T-cell (primary cell): ENCODE measurements at regions of chr6 and their contacts with region 1.

Region 1: GRCh38 chr6:27312146-27312949 is at the start of gene POM121L2:
- DNase-seq: peak in 33 of 35 experiments; percentile 6 to 78 (median 44)
- ATAC-seq: peak; percentile 57 to 78 (median 74)
- H3K4me3 ChIP-seq: peak within 1 kb of the TSS; percentile 55 to 80
- H3K4me3 Mint-ChIP-seq: peak within 1 kb of the TSS; percentile 77 to 80 (median 78)
- H3K27ac ChIP-seq: no peak within 1 kb of the TSS
- H3K27ac Mint-ChIP-seq: peak within 1 kb of the TSS in 1 of 2 donors; percentile 12
- H3K4me1 ChIP-seq: peaks cover 0 to 14% of the 10 kb centered on the region in 2 experiments
- H3K4me1 Mint-ChIP-seq: peaks cover 9 to 13% (median 12%) of the 10 kb centered on the region in 3 donors
- H3K27me3 ChIP-seq: peaks cover 21 to 41% of the 10 kb centered on the region in 2 experiments
- H3K27me3 Mint-ChIP-seq: peaks cover 62 to 75% of the 10 kb centered on the region in 2 donors
- total RNA-seq, gene POM121L2: not detected

Region 2: GRCh38 chr6:27049863-27050781 is 262.2 kb before region 1 on chr6:
- CTCF ChIA-PET with region 1: no interaction called
- POLR2A ChIA-PET with region 1: interaction called in 1 of 2 experiments, 11 read pairs
- DNase-seq: no peak
- ATAC-seq: no peak
- H3K4me3 ChIP-seq: no peak overlapping the region
- H3K4me3 Mint-ChIP-seq: no peak overlapping the region
- H3K27ac ChIP-seq: no peak overlapping the region
- H3K27ac Mint-ChIP-seq: no peak overlapping the region
- H3K4me1 ChIP-seq: no peaks in the 10 kb centered on the region
- H3K4me1 Mint-ChIP-seq: no peaks in the 10 kb centered on the region
- H3K27me3 ChIP-seq: peaks cover 5 to 20% of the 10 kb centered on the region in 2 experiments
- H3K27me3 Mint-ChIP-seq: peaks cover 16 to 21% of the 10 kb centered on the region in 2 donors

Region 3: GRCh38 chr6:27280064-27280539 is 32.2 kb before region 1 on chr6:
- CTCF ChIA-PET with region 1: no interaction called
- POLR2A ChIA-PET with region 1: interaction called in 1 of 2 experiments, 10 read pairs
- DNase-seq: peak in 1 of 35 experiments; percentile 30
- ATAC-seq: no peak
- H3K4me3 ChIP-seq: no peak overlapping the region
- H3K4me3 Mint-ChIP-seq: no peak overlapping the region
- H3K27ac ChIP-seq: no peak overlapping the region
- H3K27ac Mint-ChIP-seq: peak overlapping the region in 1 of 2 donors; percentile 71
- H3K4me1 ChIP-seq: peaks cover 0 to 9% of the 10 kb centered on the region in 2 experiments
- H3K4me1 Mint-ChIP-seq: peaks cover 0 to 7% (median 5%) of the 10 kb centered on the region in 3 donors
- H3K27me3 ChIP-seq: peaks cover 50 to 68% of the 10 kb centered on the region in 2 experiments
- H3K27me3 Mint-ChIP-seq: peaks cover 76 to 87% of the 10 kb centered on the region in 2 donors